ENCODE measurements at regions of chr10 and their contacts with region 1.

Region 1: GRCh38 chr10:16843252-16843870 is 26.1 kb upstream of the RSU1 start:
- DNase-seq: no peak
- ATAC-seq: peak; percentile 59

Region 2: DNA sequence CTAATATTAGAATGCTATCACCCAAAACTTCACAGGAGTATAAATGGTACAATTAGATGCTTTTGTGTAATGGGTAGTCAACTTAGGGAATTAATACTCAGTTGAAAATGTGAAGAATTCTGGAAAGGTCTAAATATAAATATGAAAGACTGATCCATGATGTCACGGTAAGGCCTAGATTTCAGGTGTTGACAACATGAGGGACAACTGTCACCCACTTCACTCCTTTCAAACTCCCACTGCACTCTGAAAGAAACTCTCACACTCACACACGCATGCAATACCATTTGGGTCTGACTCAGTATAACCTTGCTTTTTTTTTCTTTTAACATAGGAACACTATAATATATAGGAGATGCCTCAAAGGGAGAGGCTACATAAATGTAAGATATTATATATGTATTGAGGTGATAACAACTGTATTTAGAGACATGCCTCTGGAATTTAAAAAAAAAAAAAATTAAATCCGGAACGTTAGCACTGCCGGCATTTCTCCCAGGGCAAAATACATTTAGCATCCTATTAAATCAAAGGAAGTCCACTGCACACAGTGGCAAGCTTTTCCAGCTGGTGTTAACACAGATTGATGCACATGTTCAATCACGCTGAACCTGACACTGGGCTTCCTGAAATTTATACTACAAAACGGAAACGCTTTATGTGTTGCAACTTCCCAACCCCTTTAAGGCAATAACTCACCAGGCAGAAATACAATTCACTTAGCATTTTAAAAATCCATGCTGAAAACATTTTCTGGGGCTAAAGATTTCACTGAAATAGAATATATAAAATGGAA is 101.0 kb before region 1 on chr10:
- intact Hi-C with region 1: no loop called
- DNase-seq: no peak
- ATAC-seq: no peak

Region 3: GRCh38 chr10:17257466-17258321 is 414.3 kb after region 1 on chr10:
- intact Hi-C with region 1: loop called (anchors 5 kb)
- DNase-seq: peak; percentile 30 to 31
- ATAC-seq: peak; percentile 85

Measured in left colon (tissue), 2 donors.